Heart left ventricle (tissue), 16 donors: ENCODE measurements at regions of chr6 and their contacts with region 1.

Region 1: DNA sequence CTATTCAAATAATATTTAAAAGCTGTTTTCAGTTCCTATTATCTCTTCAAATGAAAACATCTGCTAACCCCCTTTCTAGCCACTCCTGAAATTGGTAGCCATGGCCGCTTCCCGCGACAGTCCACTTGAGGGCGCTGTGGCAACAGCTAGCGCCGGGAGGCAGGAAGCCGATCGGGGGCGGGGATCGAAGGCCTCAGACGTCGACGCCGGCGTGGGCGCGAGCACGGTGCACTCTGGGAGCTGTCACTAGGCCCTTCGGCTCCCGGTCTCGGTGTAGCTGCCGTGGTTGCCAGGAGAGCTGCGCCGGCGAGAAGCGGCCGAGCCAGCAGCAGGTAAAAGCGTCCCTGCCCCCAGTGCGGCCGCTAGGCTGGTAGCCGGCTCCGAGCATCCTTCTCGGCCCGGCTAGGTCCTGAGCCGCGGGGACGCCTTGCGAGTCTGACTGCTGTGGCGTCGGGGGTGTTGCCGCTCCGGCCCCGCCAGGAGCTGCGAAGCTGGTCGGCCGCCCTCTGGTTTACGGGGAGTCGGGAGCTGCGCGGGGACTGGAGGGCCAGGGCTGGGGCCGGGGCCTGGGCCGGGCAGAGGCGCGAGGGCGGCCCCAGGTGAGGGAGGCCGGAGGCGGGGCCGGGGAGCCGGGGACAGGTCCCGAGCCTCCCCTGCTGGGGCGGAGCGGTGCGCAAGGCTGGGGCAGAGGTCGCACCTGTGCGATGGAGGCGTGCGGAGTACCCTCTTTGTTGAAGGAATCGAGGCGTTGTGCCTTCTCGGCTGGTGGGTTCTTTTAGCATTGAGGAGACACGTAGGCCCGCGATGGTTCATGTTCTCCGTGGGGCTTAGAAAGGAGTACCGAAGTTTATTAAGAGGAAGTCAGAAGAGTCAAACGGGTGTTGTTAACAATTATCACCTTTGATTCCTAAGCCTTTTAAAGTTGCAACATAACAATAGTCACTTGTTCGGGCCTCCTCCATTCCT is at the start of gene DOP1A:
- DNase-seq: peak; percentile 96 to 98 (median 97)
- ATAC-seq: peak; percentile 92 to 98 (median 98)
- H3K4me3 ChIP-seq: peak within 1 kb of the TSS; percentile 79 to 98 (median 90)
- H3K27ac ChIP-seq: peak within 1 kb of the TSS; percentile 67 to 95 (median 90)
- H3K4me1 ChIP-seq: peaks cover 0 to 54% (median 32%) of the 10 kb centered on the region in 12 donors
- H3K27me3 ChIP-seq: no peaks in the 10 kb centered on the region
- CTCF ChIP-seq: peak; percentile 96 to 100 (median 98)
- POLR2A ChIP-seq: peak in 1 of 2 donors; percentile 63
- total RNA-seq, gene DOP1A: 12.6 to 25.7 (median 24.0) TPM

Region 2: DNA sequence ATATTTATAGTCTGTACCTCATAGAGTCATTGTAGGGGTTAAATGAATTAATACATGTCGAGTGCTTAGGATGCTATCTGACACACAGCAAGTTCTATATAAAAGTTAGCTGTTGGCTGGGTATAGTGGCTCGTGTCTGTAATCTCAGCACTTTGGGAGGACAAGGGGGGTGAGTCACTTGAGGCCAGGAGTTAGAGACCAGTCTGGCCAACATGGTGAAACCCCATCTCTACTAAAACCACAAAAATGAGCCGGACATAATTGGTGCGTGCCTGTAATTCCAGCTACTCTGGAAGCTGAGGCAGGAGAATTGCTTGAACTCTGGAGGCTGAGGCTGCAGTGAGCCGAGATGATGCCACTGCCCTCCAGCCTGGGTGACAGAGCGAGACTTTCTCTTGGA is 225.0 kb before region 1 on chr6:
- intact Hi-C with region 1: no loop called
- DNase-seq: no peak
- ATAC-seq: no peak
- H3K4me3 ChIP-seq: no peak overlapping the region
- H3K27ac ChIP-seq: no peak overlapping the region
- H3K4me1 ChIP-seq: no peaks in the 10 kb centered on the region
- H3K27me3 ChIP-seq: no peaks in the 10 kb centered on the region
- CTCF ChIP-seq: no peak
- POLR2A ChIP-seq: no peak

Region 3: GRCh38 chr6:82959385-82959941 is 108.3 kb before region 1 on chr6:
- intact Hi-C with region 1: no loop called
- DNase-seq: no peak
- ATAC-seq: no peak
- H3K4me3 ChIP-seq: no peak overlapping the region
- H3K27ac ChIP-seq: no peak overlapping the region
- H3K4me1 ChIP-seq: peaks cover 0 to 1% (median 0%) of the 10 kb centered on the region in 12 donors
- H3K27me3 ChIP-seq: no peaks in the 10 kb centered on the region
- CTCF ChIP-seq: no peak
- POLR2A ChIP-seq: no peak

Region 4: DNA sequence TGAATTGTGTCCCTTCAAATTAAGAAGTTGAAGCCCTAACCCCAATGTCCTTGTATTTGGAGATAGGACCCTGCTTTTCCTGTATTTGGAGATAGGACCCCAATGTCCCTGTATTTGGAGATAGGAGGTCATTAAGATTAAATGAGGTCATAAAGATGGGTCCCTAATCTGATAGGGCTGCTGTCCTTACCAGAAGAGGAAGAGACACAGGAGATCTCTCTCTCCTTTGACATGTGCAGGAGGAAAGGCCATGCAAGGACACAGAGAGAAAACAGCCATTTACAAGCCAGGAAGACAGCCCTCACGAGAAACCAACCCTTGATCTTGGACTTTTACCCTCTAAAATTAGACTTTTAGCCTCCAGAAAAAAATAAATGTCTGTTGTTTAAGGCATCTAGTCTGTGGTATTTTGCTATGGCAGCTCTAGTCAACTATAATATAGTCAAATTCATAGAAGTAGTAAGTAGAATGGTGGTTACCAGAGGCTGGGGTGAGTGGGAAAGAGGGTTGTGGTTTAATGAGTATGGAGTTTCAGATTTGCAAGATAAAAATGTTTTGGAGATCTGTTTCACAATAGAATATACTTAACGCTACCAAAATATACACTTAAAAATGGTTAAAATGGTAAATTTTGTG is 61.3 kb before region 1 on chr6:
- intact Hi-C with region 1: no loop called
- DNase-seq: no peak
- ATAC-seq: no peak
- H3K4me3 ChIP-seq: no peak overlapping the region
- H3K27ac ChIP-seq: no peak overlapping the region
- H3K4me1 ChIP-seq: peaks cover 0 to 12% (median 0%) of the 10 kb centered on the region in 12 donors
- H3K27me3 ChIP-seq: no peaks in the 10 kb centered on the region
- CTCF ChIP-seq: no peak
- POLR2A ChIP-seq: no peak

Region 5: DNA sequence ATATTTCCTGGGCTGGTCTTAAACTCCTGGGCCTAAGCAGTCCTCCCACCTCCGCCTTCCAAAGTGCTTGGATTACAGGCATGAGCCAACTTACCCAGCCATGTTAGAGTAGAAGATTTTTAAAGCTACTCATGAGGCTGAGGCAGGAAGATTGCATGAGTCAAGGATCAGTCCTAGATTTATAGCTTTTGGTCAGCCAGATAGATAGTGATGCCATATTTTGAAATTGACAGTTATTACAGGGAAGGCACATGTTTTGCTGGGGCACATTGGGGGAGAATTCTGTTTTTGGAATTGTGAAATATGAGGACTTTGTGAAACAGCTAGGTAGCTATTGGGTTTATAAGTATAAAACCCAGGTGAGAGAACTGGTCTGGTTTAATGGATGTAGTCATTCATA is 40.6 kb after region 1 on chr6:
- intact Hi-C with region 1: loop called in 3 of 10 experiments (anchors 5 kb)
- DNase-seq: no peak
- ATAC-seq: no peak
- H3K4me3 ChIP-seq: no peak overlapping the region
- H3K27ac ChIP-seq: no peak overlapping the region
- H3K4me1 ChIP-seq: peaks cover 0 to 3% (median 0%) of the 10 kb centered on the region in 12 donors
- H3K27me3 ChIP-seq: no peaks in the 10 kb centered on the region
- CTCF ChIP-seq: no peak
- POLR2A ChIP-seq: no peak

Region 6: DNA sequence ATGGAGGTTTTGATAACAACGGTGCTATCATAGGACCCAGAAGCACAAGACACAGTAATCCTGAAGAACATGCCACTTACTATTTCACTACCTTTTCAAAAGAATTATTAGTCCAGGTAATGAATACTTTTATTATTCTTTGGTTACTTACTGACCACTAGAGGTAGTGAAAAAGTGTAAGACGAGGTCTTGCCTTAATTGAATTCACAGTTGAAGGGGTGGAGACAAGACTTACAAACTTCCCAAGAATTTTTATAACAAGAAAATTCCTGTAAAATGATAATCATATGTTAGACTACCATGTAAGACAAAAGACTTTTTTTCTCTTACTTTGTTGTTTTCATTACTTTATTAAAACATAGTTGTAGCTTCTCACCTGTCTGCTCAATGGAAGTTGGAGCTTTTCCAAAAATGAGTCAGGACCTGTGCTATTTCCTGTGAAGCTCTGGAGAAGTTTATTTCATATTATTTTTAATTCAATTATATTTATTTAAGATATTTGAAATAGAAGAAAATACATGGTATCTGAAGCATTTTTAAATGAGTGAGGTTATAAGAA is 52.1 kb after region 1 on chr6:
- intact Hi-C with region 1: loop called in 1 of 10 experiments (anchors 5 kb)
- DNase-seq: no peak
- ATAC-seq: no peak
- H3K4me3 ChIP-seq: no peak overlapping the region
- H3K27ac ChIP-seq: no peak overlapping the region
- H3K4me1 ChIP-seq: no peaks in the 10 kb centered on the region
- H3K27me3 ChIP-seq: no peaks in the 10 kb centered on the region
- CTCF ChIP-seq: no peak
- POLR2A ChIP-seq: no peak

Region 7: DNA sequence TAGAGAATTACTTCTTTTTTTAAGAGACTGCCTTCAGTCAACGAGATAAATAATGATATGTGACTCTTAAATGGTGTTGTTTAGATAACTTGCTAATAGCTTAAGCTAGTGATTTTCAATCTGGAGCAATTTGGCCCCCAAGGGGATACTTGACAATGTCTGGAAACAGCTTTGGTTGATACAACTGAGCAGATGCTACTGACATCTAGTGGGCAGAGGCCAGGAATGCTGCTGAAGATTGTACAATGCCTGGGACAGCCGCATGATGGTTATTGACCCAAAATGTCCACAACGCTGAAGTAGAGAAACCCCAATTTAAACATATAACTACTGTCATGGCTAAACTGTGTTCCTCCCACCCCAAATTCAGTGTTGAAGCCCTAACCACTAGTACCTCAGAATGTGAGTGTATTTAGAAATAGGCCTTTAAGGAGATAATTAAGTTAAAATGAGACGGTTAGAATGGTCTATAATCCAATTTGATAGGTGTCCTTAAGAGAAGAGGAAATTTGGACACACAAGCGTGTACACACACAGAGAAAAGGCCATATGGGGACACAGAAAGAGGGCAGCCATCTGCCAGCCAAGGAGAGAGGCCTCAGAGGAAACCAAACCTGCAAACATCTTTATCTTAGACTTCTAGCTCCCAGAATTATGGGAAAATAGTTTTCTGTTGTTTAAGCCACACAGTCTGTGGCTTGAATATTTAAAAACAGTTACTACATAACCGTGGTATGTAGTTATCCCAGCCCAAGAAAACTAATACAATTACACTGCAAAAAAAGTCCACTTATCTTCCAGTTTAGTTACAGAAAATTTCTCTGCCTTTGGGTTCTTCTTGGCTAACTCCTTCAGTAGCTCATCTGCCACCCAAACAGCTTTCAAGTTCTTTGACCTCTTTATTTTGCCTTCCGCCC is 147.7 kb after region 1 on chr6:
- intact Hi-C with region 1: loop called (anchors 1 to 5 kb)
- DNase-seq: peak; percentile 33 to 64 (median 62)
- ATAC-seq: peak; percentile 58 to 96 (median 93)
- H3K4me3 ChIP-seq: no peak overlapping the region
- H3K27ac ChIP-seq: no peak overlapping the region
- H3K4me1 ChIP-seq: peaks cover 0 to 10% (median 0%) of the 10 kb centered on the region in 12 donors
- H3K27me3 ChIP-seq: no peaks in the 10 kb centered on the region
- CTCF ChIP-seq: peak; percentile 51 to 88 (median 78)
- POLR2A ChIP-seq: no peak

Region 8: GRCh38 chr6:83352424-83353061 is 284.8 kb after region 1 on chr6:
- intact Hi-C with region 1: no loop called
- DNase-seq: no peak
- ATAC-seq: no peak
- H3K4me3 ChIP-seq: no peak overlapping the region
- H3K27ac ChIP-seq: no peak overlapping the region
- H3K4me1 ChIP-seq: no peaks in the 10 kb centered on the region
- H3K27me3 ChIP-seq: no peaks in the 10 kb centered on the region
- CTCF ChIP-seq: no peak
- POLR2A ChIP-seq: no peak